ENCODE measurements at regions of chr12 and their contacts with region 1.

Region 1: DNA sequence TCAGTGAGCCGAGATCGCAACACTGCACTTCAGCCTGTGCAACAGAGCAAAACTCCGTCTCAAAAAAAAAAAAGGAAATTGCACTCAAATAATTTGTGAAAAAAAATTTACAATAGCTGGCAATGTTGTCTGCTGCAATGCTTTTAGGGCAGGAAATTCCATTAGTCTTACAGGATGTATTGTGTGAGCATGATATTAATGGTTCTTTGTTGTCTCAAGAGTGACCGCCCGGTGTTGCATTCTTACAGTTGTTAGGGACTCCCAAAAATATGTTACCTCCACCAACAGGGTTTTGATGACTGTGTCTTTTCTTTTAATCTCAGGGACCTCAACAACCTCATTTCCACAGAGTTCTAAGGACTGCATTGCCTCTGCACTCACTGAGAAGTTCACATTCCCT is 44.8 kb downstream of the PZP start:
- DNase-seq: peak; percentile 93
- H3K4me3 ChIP-seq: no peak overlapping the region
- H3K27ac ChIP-seq: peak overlapping the region; percentile 81
- H3K4me1 ChIP-seq: peaks cover 34% of the 10 kb centered on the region
- H3K27me3 ChIP-seq: no peaks in the 10 kb centered on the region
- CTCF ChIP-seq: no peak
- POLR2A ChIP-seq: peak; percentile 45

Region 2: GRCh38 chr12:8687846-8688601 is 475.4 kb before region 1 on chr12:
- CTCF ChIA-PET with region 1: no interaction called
- POLR2A ChIA-PET with region 1: no interaction called
- dilution Hi-C with region 1: no loop called
- intact Hi-C with region 1: no loop called
- DNase-seq: peak; percentile 97
- H3K4me3 ChIP-seq: no peak overlapping the region
- H3K27ac ChIP-seq: peak overlapping the region; percentile 34
- H3K4me1 ChIP-seq: peaks cover 32% of the 10 kb centered on the region
- H3K27me3 ChIP-seq: no peaks in the 10 kb centered on the region
- CTCF ChIP-seq: no peak
- POLR2A ChIP-seq: peak; percentile 77

Region 3: DNA sequence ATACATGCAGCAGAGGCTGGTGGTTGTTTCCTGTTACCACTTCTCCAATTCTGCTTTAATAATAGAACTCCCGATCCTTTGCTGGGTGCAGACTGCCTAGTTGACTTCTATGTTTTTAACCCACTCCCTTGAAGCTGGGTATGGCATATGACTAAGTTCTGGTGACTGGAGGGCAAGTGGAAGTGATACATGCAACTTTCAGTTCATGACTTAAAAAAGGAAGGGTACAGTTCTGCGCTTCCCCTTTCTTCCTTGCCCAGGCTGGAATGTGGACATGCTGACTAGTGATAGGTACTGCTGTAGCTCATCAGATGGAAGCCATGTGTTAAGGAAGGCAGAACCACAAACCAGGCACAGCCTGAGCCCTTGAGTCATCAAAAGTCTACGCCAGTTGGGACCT is 45.2 kb before region 1 on chr12:
- CTCF ChIA-PET with region 1: no interaction called
- POLR2A ChIA-PET with region 1: no interaction called
- dilution Hi-C with region 1: no loop called
- intact Hi-C with region 1: loop called (anchors 5 kb)
- DNase-seq: peak; percentile 16
- H3K4me3 ChIP-seq: no peak overlapping the region
- H3K27ac ChIP-seq: no peak overlapping the region
- H3K4me1 ChIP-seq: peaks cover under 1% of the 10 kb centered on the region
- H3K27me3 ChIP-seq: peaks cover 0 to 4% of the 10 kb centered on the region in 2 experiments
- CTCF ChIP-seq: no peak
- POLR2A ChIP-seq: no peak

Region 4: GRCh38 chr12:9149372-9149771 is 14.0 kb before region 1 on chr12:
- CTCF ChIA-PET with region 1: interaction called, 7 read pairs
- POLR2A ChIA-PET with region 1: no interaction called
- dilution Hi-C with region 1: no loop called
- intact Hi-C with region 1: loop called (anchors 1 kb)
- DNase-seq: no peak
- H3K4me3 ChIP-seq: no peak overlapping the region
- H3K27ac ChIP-seq: no peak overlapping the region
- H3K4me1 ChIP-seq: peaks cover 7% of the 10 kb centered on the region
- H3K27me3 ChIP-seq: peaks cover 0 to 6% of the 10 kb centered on the region in 2 experiments
- CTCF ChIP-seq: no peak
- POLR2A ChIP-seq: no peak

Region 5: GRCh38 chr12:9273276-9273675 is 109.9 kb after region 1 on chr12:
- CTCF ChIA-PET with region 1: no interaction called
- POLR2A ChIA-PET with region 1: no interaction called
- dilution Hi-C with region 1: no loop called
- intact Hi-C with region 1: no loop called
- DNase-seq: no peak
- H3K4me3 ChIP-seq: no peak overlapping the region
- H3K27ac ChIP-seq: no peak overlapping the region
- H3K4me1 ChIP-seq: no peaks in the 10 kb centered on the region
- H3K27me3 ChIP-seq: peaks cover 9 to 22% of the 10 kb centered on the region in 2 experiments
- CTCF ChIP-seq: no peak
- POLR2A ChIP-seq: no peak

Region 6: DNA sequence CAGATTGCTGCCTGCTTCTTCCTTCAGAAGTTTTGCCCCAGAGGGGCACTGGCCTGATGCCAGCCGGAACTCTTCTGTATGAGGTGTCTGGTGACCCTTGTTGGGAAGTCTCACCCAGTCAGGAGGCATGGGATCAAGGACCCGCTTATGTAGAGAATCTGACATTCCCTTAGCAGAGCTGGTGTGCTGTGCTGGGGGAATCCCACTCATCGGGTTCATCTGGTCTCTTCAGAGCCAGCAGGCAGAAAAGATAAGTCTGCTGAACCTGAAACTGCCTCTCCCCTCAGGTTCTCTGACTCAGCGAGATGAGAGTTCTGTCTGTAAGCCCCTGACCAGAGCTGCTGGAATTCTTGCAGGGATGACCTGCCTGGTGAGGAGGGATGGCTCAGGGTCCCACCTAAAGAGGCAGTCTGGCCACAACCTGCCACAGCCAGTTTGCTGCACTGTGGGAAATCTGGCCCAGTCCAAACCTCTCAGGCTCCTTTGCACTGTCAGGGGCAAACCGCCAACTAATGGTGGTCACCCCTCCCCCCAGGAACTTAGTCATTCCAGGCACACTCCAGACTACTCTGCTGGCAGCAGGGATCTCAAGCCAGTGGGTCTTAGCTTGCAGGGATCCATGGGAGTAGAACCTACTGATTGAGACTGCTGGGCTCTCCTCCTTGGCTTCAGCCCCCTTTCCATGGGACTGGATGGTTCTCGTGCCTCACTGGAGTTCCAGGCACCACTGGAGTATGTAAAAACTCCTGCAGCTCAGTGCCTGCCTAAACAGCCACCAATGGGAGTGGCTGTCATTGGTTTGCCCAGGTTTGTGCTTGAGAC is 510.2 kb after region 1 on chr12:
- CTCF ChIA-PET with region 1: no interaction called
- POLR2A ChIA-PET with region 1: no interaction called
- dilution Hi-C with region 1: no loop called
- intact Hi-C with region 1: no loop called
- DNase-seq: peak; percentile 94
- H3K4me3 ChIP-seq: no peak overlapping the region
- H3K27ac ChIP-seq: peak overlapping the region; percentile 19
- H3K4me1 ChIP-seq: peaks cover 14% of the 10 kb centered on the region
- H3K27me3 ChIP-seq: no peaks in the 10 kb centered on the region
- CTCF ChIP-seq: no peak
- POLR2A ChIP-seq: no peak